ENCODE measurements at regions of chr15 and their contacts with region 1.

Region 1: DNA sequence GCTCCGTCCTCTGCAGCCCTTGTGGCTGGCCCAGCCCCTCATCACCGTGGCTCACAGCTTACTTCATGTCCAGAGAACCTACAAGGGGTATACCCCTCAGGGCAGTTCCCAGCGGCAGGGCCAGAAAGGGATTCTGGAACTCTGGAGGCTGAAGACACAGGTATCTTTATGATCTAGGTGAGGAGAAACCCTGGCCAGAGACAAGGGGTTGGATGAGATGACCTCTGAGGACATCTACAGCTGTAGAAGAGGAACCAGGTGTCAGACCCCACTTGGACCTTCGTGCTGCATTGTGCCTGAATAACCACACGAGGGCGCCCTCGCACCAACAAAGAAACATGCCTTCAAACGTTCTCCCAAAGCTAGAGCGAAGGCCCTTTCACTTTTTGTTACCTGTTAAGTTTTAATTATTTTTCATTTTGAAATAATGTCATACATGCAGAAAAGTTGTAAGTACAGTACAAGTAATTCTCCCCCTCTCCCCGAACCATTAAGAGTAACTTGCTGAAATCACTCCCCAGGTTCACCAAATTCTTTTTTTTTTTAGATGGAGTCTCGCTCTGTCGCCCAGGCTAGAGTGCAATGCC is 118.7 kb upstream of the SMAD3 start:
- DNase-seq: peak; percentile 59 to 94
- H3K4me3 ChIP-seq: no peak overlapping the region
- CTCF ChIP-seq: peak in 1 of 3 donors; percentile 90
- POLR2A ChIP-seq: no peak

Region 2: GRCh38 chr15:66830358-66830757 is 116.3 kb before region 1 on chr15:
- intact Hi-C with region 1: no loop called
- DNase-seq: no peak
- H3K4me3 ChIP-seq: no peak overlapping the region
- CTCF ChIP-seq: no peak
- POLR2A ChIP-seq: no peak

Region 3: DNA sequence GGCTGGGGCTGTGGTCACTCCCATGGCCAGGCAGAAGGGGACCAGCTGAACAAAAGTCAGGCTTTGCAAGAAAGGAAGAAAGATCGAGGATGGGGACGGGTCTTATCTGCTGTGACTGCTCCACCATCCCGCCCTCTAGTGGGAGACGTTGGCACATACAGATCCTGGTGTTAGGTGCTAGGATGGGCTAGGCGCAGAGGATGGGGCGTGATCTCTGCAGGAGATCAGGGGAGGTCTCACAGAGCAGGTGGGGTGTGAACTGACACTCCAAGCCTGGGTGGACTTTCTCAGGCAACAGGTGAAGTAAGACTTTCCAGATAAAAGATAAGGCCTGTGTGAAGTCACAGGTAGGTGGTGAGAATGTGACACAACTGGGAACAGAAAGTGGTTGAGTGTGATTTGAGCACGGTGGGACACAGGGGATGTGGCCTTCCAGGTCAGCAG is 23.2 kb before region 1 on chr15:
- intact Hi-C with region 1: no loop called
- DNase-seq: no peak
- H3K4me3 ChIP-seq: no peak overlapping the region
- CTCF ChIP-seq: no peak
- POLR2A ChIP-seq: no peak

Region 4: GRCh38 chr15:67303490-67304363 is 357.1 kb after region 1 on chr15:
- intact Hi-C with region 1: loop called (anchors 5 kb)
- DNase-seq: no peak
- H3K4me3 ChIP-seq: no peak overlapping the region
- CTCF ChIP-seq: no peak
- POLR2A ChIP-seq: no peak

Region 5: DNA sequence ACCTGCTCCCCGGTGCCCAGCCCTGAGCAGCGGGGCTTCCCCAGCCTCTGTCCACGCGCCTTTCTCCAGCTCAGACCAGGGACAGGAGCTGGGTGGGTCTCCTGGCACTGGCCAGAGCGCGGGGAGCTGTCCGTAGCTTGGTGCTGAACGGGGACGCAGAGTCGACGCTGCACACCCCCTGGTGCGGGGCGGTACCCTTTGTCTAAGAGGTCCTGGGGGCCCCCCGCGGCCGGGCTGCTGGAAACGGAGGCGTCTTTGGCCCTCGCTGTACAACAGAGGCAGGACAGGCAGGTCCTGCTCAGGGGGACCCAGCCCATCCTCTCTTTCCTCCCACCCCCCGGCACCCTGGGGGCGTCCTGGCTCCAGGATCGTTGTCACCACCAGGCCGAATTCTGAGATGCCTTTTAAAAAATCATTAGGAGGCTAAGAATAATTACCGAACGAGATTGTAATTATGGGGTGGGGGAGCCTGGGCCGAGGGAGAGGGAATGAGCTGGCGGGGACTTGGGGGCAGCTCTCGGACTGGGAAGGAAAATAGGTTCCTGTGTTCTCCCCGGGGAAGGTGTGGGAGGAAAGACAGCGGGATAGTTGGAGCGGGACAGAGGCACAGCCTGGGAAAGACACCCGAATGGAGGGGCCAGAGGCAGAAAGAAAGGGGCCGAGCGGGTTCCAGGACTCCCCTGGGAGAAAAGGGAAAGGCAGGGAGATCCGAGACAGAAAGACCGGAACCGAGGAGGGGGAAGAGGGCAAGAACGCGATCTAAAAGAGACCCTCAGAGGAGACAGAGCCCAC is 874.5 kb after region 1 on chr15:
- intact Hi-C with region 1: loop called (anchors 10 kb)
- DNase-seq: no peak
- H3K4me3 ChIP-seq: no peak overlapping the region
- CTCF ChIP-seq: no peak
- POLR2A ChIP-seq: no peak